Activated B cell treated with CpG ODN at 0.5 μM for 24 hours (primary cell): ENCODE measurements at regions of chr19 and their contacts with region 1.

Region 1: GRCh38 chr19:6632002-6632621 is 37.8 kb downstream of the TNFSF14 start:
- DNase-seq: peak; percentile 25
- ATAC-seq: peak; percentile 81
- H3K4me3 Mint-ChIP-seq: no peak overlapping the region
- H3K27ac Mint-ChIP-seq: peak overlapping the region; percentile 26
- H3K4me1 Mint-ChIP-seq: peaks cover 29% of the 10 kb centered on the region
- H3K27me3 Mint-ChIP-seq: peaks cover 2% of the 10 kb centered on the region
- CTCF ChIP-seq: peak; percentile 65

Region 2: GRCh38 chr19:6167115-6167514 is 465.0 kb before region 1 on chr19:
- CTCF ChIA-PET with region 1: no interaction called
- POLR2A ChIA-PET with region 1: no interaction called
- intact Hi-C with region 1: loop called (anchors 2 kb)
- DNase-seq: no peak
- ATAC-seq: no peak
- H3K4me3 Mint-ChIP-seq: no peak overlapping the region
- H3K27ac Mint-ChIP-seq: no peak overlapping the region
- H3K4me1 Mint-ChIP-seq: no peaks in the 10 kb centered on the region
- H3K27me3 Mint-ChIP-seq: peaks cover 8% of the 10 kb centered on the region
- CTCF ChIP-seq: no peak

Region 3: DNA sequence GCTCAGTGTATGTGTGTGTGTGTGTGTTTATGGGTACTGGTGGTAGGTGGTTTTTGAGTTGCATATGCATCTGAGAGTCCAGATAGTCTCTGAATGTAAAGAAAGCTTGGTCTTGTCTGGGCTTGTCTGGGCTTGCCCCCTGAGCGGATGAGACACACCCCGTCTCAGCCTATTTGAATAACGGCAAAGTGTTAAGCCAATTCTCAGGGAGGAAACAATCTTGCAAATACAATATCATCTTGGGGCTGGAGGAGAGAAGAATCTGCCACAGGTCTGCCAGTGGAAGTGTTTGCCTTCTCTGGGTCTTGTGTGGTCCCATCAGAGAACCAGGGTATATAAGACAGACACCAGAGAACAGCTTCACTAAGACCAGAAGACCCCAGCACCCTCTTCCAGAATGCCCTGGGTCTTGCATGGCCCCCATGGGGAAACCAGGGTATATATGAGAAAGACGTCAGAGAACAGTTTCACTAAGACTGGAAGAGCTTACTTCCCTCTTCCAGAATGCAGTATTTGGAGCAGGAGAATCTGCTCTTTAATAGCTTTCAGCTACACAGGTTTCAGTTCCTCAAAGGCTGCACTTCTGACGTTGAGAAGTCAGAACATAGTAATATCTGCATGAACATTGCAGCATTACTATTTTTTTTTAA is 54.5 kb before region 1 on chr19:
- CTCF ChIA-PET with region 1: interaction called, 4 read pairs
- POLR2A ChIA-PET with region 1: interaction called, 8 read pairs
- intact Hi-C with region 1: loop called (anchors 1 kb)
- DNase-seq: peak; percentile 54
- ATAC-seq: peak; percentile 90
- H3K4me3 Mint-ChIP-seq: peak overlapping the region; percentile 68
- H3K27ac Mint-ChIP-seq: no peak overlapping the region
- H3K4me1 Mint-ChIP-seq: peaks cover 6% of the 10 kb centered on the region
- H3K27me3 Mint-ChIP-seq: no peaks in the 10 kb centered on the region
- CTCF ChIP-seq: no peak

Region 4: GRCh38 chr19:6674868-6675305 is 42.8 kb after region 1 on chr19:
- CTCF ChIA-PET with region 1: no interaction called
- POLR2A ChIA-PET with region 1: no interaction called
- intact Hi-C with region 1: loop called (anchors 2 kb)
- DNase-seq: peak; percentile 50
- ATAC-seq: peak; percentile 69
- H3K4me3 Mint-ChIP-seq: no peak overlapping the region
- H3K27ac Mint-ChIP-seq: peak overlapping the region; percentile 7
- H3K4me1 Mint-ChIP-seq: peaks cover 30% of the 10 kb centered on the region
- H3K27me3 Mint-ChIP-seq: peaks cover 20% of the 10 kb centered on the region
- CTCF ChIP-seq: no peak

Region 5: GRCh38 chr19:6801485-6802086 is 169.5 kb after region 1 on chr19:
- CTCF ChIA-PET with region 1: interaction called, 5 read pairs
- POLR2A ChIA-PET with region 1: interaction called, 3 read pairs
- intact Hi-C with region 1: loop called (anchors 1 kb)
- DNase-seq: peak; percentile 89
- ATAC-seq: peak; percentile 71
- H3K4me3 Mint-ChIP-seq: peak overlapping the region; percentile 83
- H3K27ac Mint-ChIP-seq: peak overlapping the region; percentile 94
- H3K4me1 Mint-ChIP-seq: peaks cover 83% of the 10 kb centered on the region
- H3K27me3 Mint-ChIP-seq: no peaks in the 10 kb centered on the region
- CTCF ChIP-seq: no peak